ENCODE measurements at regions of chr6 and their contacts with region 1.

Region 1: DNA sequence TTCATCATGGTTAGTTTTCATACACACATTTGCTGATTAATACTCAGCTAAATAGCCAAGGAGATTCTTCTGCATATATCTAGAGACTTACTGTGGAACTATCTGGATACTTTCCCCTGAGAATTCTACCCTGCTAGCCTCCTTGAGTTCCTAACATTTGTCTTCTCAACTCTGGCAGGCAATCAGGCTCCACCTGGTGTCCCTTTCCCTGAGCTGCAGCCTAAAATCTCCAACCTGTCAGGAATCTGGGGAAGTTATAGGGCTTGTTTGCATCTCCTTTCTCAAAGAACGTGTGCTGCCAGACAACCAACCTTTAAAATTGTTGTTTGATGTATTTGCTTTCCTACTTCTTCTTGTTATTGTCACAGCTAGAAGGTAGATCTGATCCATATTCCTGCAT is 73.4 kb downstream of the FUT9 start:
- DNase-seq: no peak
- H3K4me3 ChIP-seq: no peak overlapping the region
- H3K27ac ChIP-seq: no peak overlapping the region
- H3K4me1 ChIP-seq: no peaks in the 10 kb centered on the region
- H3K27me3 ChIP-seq: no peaks in the 10 kb centered on the region
- CTCF ChIP-seq: peak; percentile 62

Region 2: GRCh38 chr6:95847061-95847460 is 242.1 kb before region 1 on chr6:
- CTCF ChIA-PET with region 1: no interaction called
- POLR2A ChIA-PET with region 1: no interaction called
- intact Hi-C with region 1: no loop called
- DNase-seq: no peak
- H3K4me3 ChIP-seq: no peak overlapping the region
- H3K27ac ChIP-seq: no peak overlapping the region
- H3K4me1 ChIP-seq: no peaks in the 10 kb centered on the region
- H3K27me3 ChIP-seq: no peaks in the 10 kb centered on the region
- CTCF ChIP-seq: no peak

Region 3: GRCh38 chr6:95866732-95867131 is 222.4 kb before region 1 on chr6:
- CTCF ChIA-PET with region 1: no interaction called
- POLR2A ChIA-PET with region 1: interaction called, 10 read pairs
- intact Hi-C with region 1: no loop called
- DNase-seq: peak in 1 of 2 experiments; percentile 2
- H3K4me3 ChIP-seq: no peak overlapping the region
- H3K27ac ChIP-seq: no peak overlapping the region
- H3K4me1 ChIP-seq: no peaks in the 10 kb centered on the region
- H3K27me3 ChIP-seq: no peaks in the 10 kb centered on the region
- CTCF ChIP-seq: peak; percentile 52; the same call in 1 of the 2 replicates

Region 4: GRCh38 chr6:95905132-95905531 is 184.0 kb before region 1 on chr6:
- CTCF ChIA-PET with region 1: interaction called, 18 read pairs
- POLR2A ChIA-PET with region 1: no interaction called
- intact Hi-C with region 1: no loop called
- DNase-seq: no peak
- H3K4me3 ChIP-seq: no peak overlapping the region
- H3K27ac ChIP-seq: no peak overlapping the region
- H3K4me1 ChIP-seq: no peaks in the 10 kb centered on the region
- H3K27me3 ChIP-seq: no peaks in the 10 kb centered on the region
- CTCF ChIP-seq: no peak

Region 5: DNA sequence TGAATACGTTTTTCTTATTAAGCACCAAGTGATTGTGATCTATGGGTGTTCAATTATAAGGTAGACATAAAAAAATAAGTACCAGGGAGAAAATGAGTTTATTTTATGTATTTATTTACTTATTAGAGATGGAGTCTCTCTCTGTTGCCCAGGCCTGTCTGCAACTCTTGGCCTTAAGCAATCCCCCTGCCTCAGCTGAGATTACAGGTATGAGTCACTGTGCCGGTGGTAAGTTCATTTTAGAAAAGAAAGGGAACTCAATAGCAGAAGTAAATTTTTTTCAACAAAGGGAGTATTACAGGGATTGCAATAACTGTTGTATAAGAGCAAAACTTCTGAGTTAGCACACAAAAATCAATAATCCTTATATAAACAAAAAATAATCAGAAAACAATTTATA is 172.1 kb before region 1 on chr6:
- CTCF ChIA-PET with region 1: no interaction called
- POLR2A ChIA-PET with region 1: no interaction called
- intact Hi-C with region 1: no loop called
- DNase-seq: no peak
- H3K4me3 ChIP-seq: no peak overlapping the region
- H3K27ac ChIP-seq: no peak overlapping the region
- H3K4me1 ChIP-seq: no peaks in the 10 kb centered on the region; the same call in 1 of the 2 replicates
- H3K27me3 ChIP-seq: no peaks in the 10 kb centered on the region
- CTCF ChIP-seq: no peak

Region 6: DNA sequence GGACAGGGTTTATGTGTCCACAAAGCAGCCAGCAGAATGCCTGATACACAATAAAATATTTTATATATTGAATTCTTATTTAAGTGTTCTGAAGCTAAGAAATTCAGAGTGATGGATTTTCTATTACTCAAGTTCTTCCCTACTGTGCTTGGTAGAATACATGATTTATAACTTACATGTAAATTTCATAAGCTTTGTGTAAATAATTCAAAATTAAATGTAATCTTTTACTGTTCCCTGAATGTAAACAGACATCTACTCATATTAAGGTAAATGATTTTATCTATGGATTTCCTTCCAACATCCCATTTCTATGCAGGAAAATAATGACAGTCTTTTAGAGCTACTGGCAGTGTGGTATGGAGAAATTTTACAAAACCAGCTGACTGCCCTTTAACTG is 48.0 kb before region 1 on chr6:
- CTCF ChIA-PET with region 1: no interaction called
- POLR2A ChIA-PET with region 1: no interaction called
- intact Hi-C with region 1: no loop called
- DNase-seq: no peak
- H3K4me3 ChIP-seq: no peak overlapping the region
- H3K27ac ChIP-seq: no peak overlapping the region
- H3K4me1 ChIP-seq: no peaks in the 10 kb centered on the region
- H3K27me3 ChIP-seq: no peaks in the 10 kb centered on the region
- CTCF ChIP-seq: no peak

Region 7: GRCh38 chr6:96116663-96117062 is 27.5 kb after region 1 on chr6:
- CTCF ChIA-PET with region 1: no interaction called
- POLR2A ChIA-PET with region 1: no interaction called
- intact Hi-C with region 1: no loop called
- DNase-seq: no peak
- H3K4me3 ChIP-seq: no peak overlapping the region
- H3K27ac ChIP-seq: no peak overlapping the region
- H3K4me1 ChIP-seq: no peaks in the 10 kb centered on the region
- H3K27me3 ChIP-seq: no peaks in the 10 kb centered on the region
- CTCF ChIP-seq: no peak